ENCODE measurements at regions of chr18 and their contacts with region 1.

Region 1: DNA sequence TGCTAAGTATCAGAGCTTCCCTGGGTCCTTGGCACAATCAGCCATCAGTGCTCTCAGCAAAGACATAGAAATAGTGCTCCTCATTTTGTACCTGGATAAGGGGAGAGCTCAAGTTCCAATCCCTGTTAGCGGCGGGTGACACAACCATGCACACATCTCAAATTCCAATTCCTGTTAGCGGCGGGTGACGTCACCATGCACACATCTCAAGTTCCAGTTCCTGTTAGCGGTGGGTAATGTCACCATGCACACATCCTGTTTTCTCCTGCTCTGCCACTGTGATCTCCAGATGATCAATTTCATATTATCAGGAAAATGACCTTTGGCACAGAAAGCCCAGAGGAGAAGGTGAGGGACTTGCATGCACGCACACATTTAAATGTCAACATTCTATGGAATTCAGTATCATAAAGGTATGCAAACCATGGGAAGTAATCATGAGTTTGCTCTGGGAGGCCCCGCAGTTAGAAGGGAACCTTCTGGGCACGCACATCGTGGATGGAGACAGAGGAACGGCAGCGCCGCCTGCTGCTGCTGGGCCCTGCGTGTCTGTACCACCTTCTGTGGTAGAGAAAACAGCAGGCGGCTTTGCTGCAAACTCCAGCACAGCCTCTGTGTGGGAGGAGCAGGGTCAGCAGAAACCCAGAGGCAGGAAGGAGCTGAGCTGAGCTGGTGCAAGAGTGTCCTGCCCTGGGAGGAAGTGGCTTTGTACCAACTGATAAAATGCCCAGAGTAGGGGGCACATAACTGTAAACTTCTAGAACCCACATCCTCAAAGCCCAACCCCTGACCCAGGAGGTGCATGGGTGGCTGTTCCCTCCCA is 77.8 kb downstream of the MBP start:
- DNase-seq: peak; percentile 89
- H3K4me3 Mint-ChIP-seq: peak overlapping the region; percentile 80
- H3K27ac Mint-ChIP-seq: peak overlapping the region; percentile 97
- H3K4me1 Mint-ChIP-seq: peaks cover 76% of the 10 kb centered on the region
- H3K27me3 Mint-ChIP-seq: no peaks in the 10 kb centered on the region

Region 2: GRCh38 chr18:77067291-77068061 is 12.7 kb after region 1 on chr18:
- CTCF ChIA-PET with region 1: interaction called, 20 read pairs
- POLR2A ChIA-PET with region 1: interaction called, 7 read pairs
- DNase-seq: peak; percentile 72
- H3K4me3 Mint-ChIP-seq: peak overlapping the region; percentile 64
- H3K27ac Mint-ChIP-seq: peak overlapping the region; percentile 99
- H3K4me1 Mint-ChIP-seq: peaks cover 100% of the 10 kb centered on the region
- H3K27me3 Mint-ChIP-seq: no peaks in the 10 kb centered on the region

Measured in activated CD4-positive, alpha-beta T cell treated with anti-CD3 and anti-CD28 coated beads, Interleukin-2, amount 10 ng/mL, durations not matched to agents 7 days and 5 days (primary cell).